A673 (cell line): ENCODE measurements at regions of chr11 and their contacts with region 1.

Region 1: DNA sequence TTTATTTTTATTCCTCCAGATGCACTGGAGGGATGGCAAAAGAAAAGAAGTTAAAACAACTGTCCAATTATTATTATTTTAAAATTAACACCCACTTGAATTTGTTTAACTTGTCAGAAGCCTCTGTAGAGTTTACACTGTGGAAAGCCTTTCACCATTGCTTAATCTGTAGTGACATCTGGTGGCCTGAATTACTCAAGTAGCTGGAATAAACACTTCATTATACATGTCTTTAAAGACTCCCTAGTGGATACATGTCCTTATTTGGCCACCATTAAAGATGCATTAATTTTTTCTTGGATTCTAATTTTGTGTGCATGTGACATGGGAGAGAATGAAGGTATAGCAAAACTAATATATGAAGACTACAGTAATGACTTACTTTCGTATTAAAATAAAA is 1496.5 kb downstream of the FAM181B start:
- DNase-seq: peak; percentile 91
- H3K4me3 ChIP-seq: no peak overlapping the region
- H3K27ac ChIP-seq: no peak overlapping the region
- H3K4me1 ChIP-seq: peaks cover 9% of the 10 kb centered on the region
- H3K27me3 ChIP-seq: no peaks in the 10 kb centered on the region
- CTCF ChIP-seq: peak; percentile 83

Region 2: GRCh38 chr11:79708300-79708932 is 1528.7 kb before region 1 on chr11:
- CTCF ChIA-PET with region 1: no interaction called
- POLR2A ChIA-PET with region 1: no interaction called
- intact Hi-C with region 1: loop called (anchors 1 kb)
- DNase-seq: peak; percentile 74
- H3K4me3 ChIP-seq: no peak overlapping the region
- H3K27ac ChIP-seq: no peak overlapping the region
- H3K4me1 ChIP-seq: no peaks in the 10 kb centered on the region
- H3K27me3 ChIP-seq: no peaks in the 10 kb centered on the region
- CTCF ChIP-seq: peak; percentile 64

Region 3: DNA sequence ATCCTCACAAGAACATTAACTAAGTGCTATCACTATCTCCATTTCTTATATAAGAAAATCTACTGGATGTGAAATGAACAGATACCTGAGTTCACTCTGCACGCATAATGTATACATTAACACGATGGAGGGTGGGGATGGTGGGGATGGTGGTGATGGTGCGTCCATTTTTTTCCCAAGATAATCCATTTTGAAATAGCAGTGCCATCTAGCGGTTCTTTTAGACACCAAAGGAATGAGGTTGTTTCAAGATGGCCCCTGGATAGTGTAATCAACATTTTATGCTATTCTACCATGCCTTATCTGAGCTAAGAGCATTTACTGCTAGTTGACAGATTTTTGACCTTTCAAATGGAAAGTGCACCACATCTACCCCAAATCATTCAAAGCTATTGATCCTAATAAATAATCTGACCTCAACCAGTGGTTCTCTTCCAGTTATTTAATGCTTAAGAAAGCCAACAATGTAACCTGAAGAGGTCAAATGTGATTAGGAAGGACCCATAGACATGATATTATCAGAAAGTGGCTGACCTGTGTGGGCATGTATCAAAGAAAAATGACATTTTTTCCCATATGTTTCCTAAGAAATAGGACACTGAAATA is 1081.6 kb before region 1 on chr11:
- CTCF ChIA-PET with region 1: no interaction called
- POLR2A ChIA-PET with region 1: no interaction called
- intact Hi-C with region 1: loop called (anchors 2 kb)
- DNase-seq: peak; percentile 76
- H3K4me3 ChIP-seq: no peak overlapping the region
- H3K27ac ChIP-seq: no peak overlapping the region
- H3K4me1 ChIP-seq: no peaks in the 10 kb centered on the region
- H3K27me3 ChIP-seq: no peaks in the 10 kb centered on the region
- CTCF ChIP-seq: peak; percentile 77

Region 4: DNA sequence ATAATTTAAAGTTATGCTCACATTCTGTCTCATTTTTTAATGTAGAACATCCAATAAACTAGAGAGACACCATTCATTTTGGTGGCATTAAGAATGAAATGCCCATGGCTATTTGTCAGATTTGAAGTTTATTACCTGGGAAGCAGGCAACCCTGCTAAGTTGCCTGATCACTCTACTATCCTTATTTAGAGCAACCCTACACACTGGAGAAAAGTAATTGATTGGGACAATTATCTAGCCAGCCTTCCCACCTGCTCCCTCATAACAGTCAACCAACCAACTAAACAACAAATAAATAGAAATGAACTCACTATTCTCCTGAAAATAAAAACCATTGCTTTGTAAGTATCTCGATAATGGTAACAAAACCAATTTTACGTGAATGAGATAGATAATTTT is 667.3 kb before region 1 on chr11:
- CTCF ChIA-PET with region 1: no interaction called
- POLR2A ChIA-PET with region 1: no interaction called
- intact Hi-C with region 1: no loop called
- DNase-seq: no peak
- H3K4me3 ChIP-seq: no peak overlapping the region
- H3K27ac ChIP-seq: no peak overlapping the region
- H3K4me1 ChIP-seq: no peaks in the 10 kb centered on the region
- H3K27me3 ChIP-seq: no peaks in the 10 kb centered on the region
- CTCF ChIP-seq: no peak

Region 5: GRCh38 chr11:80727315-80728230 is 509.6 kb before region 1 on chr11:
- CTCF ChIA-PET with region 1: no interaction called
- POLR2A ChIA-PET with region 1: no interaction called
- intact Hi-C with region 1: loop called (anchors 10 kb)
- DNase-seq: peak; percentile 66
- H3K4me3 ChIP-seq: no peak overlapping the region
- H3K27ac ChIP-seq: no peak overlapping the region
- H3K4me1 ChIP-seq: peaks cover 8% of the 10 kb centered on the region
- H3K27me3 ChIP-seq: no peaks in the 10 kb centered on the region
- CTCF ChIP-seq: peak; percentile 68

Region 6: GRCh38 chr11:81026032-81026431 is 211.1 kb before region 1 on chr11:
- CTCF ChIA-PET with region 1: no interaction called
- POLR2A ChIA-PET with region 1: no interaction called
- intact Hi-C with region 1: loop called (anchors 5 kb)
- DNase-seq: peak; percentile 39
- H3K4me3 ChIP-seq: no peak overlapping the region
- H3K27ac ChIP-seq: no peak overlapping the region
- H3K4me1 ChIP-seq: peaks cover 52% of the 10 kb centered on the region
- H3K27me3 ChIP-seq: no peaks in the 10 kb centered on the region
- CTCF ChIP-seq: no peak

Region 7: DNA sequence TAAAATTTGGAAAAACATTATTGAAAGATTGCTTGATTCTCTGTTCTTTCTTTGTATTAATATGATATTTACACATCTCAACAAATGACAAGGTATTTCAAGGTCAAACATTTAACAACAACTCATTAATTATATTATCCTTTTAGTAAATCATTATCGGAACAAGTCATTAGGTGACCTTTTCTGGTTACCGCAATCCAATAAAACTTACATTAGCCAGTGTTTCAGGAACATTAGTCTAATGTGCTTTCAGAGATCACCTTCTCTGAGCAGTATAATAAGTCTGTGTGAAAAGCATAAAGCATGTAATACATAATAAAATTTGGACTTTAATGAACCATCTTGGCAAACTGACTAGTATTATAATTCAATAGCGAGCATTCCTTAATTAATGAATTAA is 30.1 kb after region 1 on chr11:
- CTCF ChIA-PET with region 1: no interaction called
- POLR2A ChIA-PET with region 1: no interaction called
- intact Hi-C with region 1: no loop called
- DNase-seq: no peak
- H3K4me3 ChIP-seq: no peak overlapping the region
- H3K27ac ChIP-seq: no peak overlapping the region
- H3K4me1 ChIP-seq: no peaks in the 10 kb centered on the region
- H3K27me3 ChIP-seq: no peaks in the 10 kb centered on the region
- CTCF ChIP-seq: no peak

Region 8: DNA sequence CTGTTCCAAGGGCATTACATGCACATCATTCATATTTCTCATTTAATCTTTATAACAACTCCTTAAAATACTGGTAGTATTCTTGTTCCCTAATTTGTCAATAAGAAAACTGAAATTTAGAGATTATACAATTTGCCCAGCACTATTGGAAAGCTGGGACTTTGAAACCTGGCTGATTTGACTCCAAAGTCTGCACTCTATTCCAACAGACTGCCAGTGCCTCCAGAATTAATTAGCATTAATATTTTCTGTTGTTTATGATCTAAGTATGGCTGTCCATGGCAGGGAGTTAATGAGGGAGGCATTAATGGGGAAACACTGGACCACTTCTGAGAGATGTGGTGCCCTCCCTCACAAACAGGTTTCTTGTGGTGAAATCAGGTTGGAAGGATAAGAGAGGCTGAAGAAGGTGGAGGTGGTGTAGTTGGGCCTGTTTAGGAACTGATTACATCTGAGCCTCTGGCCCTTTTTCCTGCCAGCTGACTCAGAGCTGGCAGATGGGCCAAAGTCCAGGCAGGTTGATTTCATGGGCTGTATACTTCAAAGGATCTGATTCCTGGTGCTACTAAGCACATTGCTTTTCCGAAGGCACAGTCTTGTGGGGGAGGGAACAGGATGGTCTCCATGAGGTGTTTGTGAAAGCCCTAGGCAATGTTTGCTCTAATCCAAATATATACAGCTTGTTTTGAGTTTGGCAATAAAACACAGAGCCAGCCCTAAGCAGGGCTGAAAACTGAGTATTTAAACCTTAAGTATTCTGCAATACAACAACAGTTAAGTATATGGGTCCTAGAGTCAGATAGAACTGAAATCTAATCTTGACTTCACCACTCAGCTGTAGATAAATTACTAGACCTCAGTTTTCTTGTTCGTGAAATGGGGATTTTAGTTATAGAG is 1855.6 kb after region 1 on chr11:
- CTCF ChIA-PET with region 1: no interaction called
- POLR2A ChIA-PET with region 1: no interaction called
- intact Hi-C with region 1: no loop called
- DNase-seq: no peak
- H3K4me3 ChIP-seq: no peak overlapping the region
- H3K27ac ChIP-seq: no peak overlapping the region
- H3K4me1 ChIP-seq: no peaks in the 10 kb centered on the region
- H3K27me3 ChIP-seq: no peaks in the 10 kb centered on the region
- CTCF ChIP-seq: no peak